Heart right ventricle (tissue), 16 donors: ENCODE measurements at regions of chr16 and their contacts with region 1.

Region 1: GRCh38 chr16:57413301-57413730 is 8.7 kb downstream of the CCL17 start:
- DNase-seq: no peak
- ATAC-seq: no peak
- H3K4me3 ChIP-seq: no peak overlapping the region
- H3K27ac ChIP-seq: no peak overlapping the region
- H3K4me1 ChIP-seq: peaks cover 11 to 51% (median 41%) of the 10 kb centered on the region in 9 donors
- H3K27me3 ChIP-seq: no peaks in the 10 kb centered on the region
- CTCF ChIP-seq: no peak

Region 2: DNA sequence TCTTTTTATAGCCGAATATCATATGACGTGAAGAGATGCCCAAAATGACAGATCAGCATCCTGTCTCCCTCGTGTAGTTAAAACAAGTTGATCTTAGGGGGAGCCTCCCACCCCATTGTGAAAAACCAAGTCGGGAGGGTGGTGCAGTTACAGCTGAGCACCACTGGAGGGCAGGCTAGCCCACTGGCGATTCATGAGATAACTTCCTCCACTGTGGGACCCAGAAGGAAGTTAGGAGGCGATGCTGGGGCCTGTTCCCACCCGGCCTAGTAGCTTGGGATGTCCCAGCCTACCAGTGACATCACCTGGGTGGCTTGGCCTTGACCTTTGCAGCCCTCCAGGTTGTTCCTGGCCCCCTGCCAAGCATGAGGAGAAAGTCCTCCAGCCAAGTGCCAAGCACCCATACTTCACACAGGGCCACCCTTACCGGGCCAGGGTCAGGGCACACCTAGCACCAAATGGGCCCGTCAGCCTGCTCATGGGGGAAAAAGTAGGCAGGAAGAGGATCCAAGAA is 329.0 kb before region 1 on chr16:
- intact Hi-C with region 1: loop called in 2 of 10 experiments (anchors 10 kb)
- DNase-seq: peak; percentile 62 to 74
- ATAC-seq: peak; percentile 78 to 89 (median 82)
- H3K4me3 ChIP-seq: no peak overlapping the region
- H3K27ac ChIP-seq: peak overlapping the region in 5 of 10 donors; percentile 9 to 59 (median 27)
- H3K4me1 ChIP-seq: peaks cover 0 to 14% (median 7%) of the 10 kb centered on the region in 9 donors
- H3K27me3 ChIP-seq: no peaks in the 10 kb centered on the region
- CTCF ChIP-seq: peak; percentile 97 to 99 (median 98)

Region 3: GRCh38 chr16:57244767-57245471 is 168.4 kb before region 1 on chr16 and contains the start of gene ARL2BP:
- intact Hi-C with region 1: loop called in 2 of 10 experiments (anchors 2 to 10 kb)
- DNase-seq: peak; percentile 97 to 98
- ATAC-seq: peak; percentile 97 to 100 (median 98)
- H3K4me3 ChIP-seq: peak within 1 kb of the TSS; percentile 74 to 97 (median 82)
- H3K27ac ChIP-seq: peak within 1 kb of the TSS; percentile 89 to 97 (median 96)
- H3K4me1 ChIP-seq: peaks cover 0 to 31% (median 12%) of the 10 kb centered on the region in 9 donors
- H3K27me3 ChIP-seq: no peaks in the 10 kb centered on the region
- CTCF ChIP-seq: peak in 5 of 9 donors; percentile 8 to 40 (median 25)
- total RNA-seq, gene ARL2BP: 39.9 to 53.9 (median 45.9) TPM

Region 4: GRCh38 chr16:57316390-57317017 is 96.8 kb before region 1 on chr16:
- intact Hi-C with region 1: loop called in 1 of 10 experiments (anchors 5 kb)
- DNase-seq: peak in 1 of 2 donors; percentile 79
- ATAC-seq: peak; percentile 78 to 92 (median 86)
- H3K4me3 ChIP-seq: no peak overlapping the region
- H3K27ac ChIP-seq: peak overlapping the region in 9 of 10 donors; percentile 62 to 87 (median 80)
- H3K4me1 ChIP-seq: peaks cover 0 to 56% (median 36%) of the 10 kb centered on the region in 9 donors
- H3K27me3 ChIP-seq: no peaks in the 10 kb centered on the region
- CTCF ChIP-seq: no peak

Region 5: GRCh38 chr16:57372372-57373116 is 40.8 kb before region 1 on chr16 and contains the start of gene CX3CL1:
- intact Hi-C with region 1: loop called in 4 of 10 experiments (anchors 2 to 5 kb)
- DNase-seq: peak; percentile 64 to 83
- ATAC-seq: peak; percentile 70 to 95 (median 89)
- H3K4me3 ChIP-seq: peak within 1 kb of the TSS; percentile 42 to 83 (median 70)
- H3K27ac ChIP-seq: peak within 1 kb of the TSS; percentile 72 to 97 (median 94)
- H3K4me1 ChIP-seq: peaks cover 0 to 59% (median 25%) of the 10 kb centered on the region in 9 donors
- H3K27me3 ChIP-seq: no peaks in the 10 kb centered on the region
- CTCF ChIP-seq: peak in 7 of 9 donors; percentile 24 to 64 (median 39)
- total RNA-seq, gene CX3CL1: 7.8 to 46.3 (median 14.5) TPM

Region 6: DNA sequence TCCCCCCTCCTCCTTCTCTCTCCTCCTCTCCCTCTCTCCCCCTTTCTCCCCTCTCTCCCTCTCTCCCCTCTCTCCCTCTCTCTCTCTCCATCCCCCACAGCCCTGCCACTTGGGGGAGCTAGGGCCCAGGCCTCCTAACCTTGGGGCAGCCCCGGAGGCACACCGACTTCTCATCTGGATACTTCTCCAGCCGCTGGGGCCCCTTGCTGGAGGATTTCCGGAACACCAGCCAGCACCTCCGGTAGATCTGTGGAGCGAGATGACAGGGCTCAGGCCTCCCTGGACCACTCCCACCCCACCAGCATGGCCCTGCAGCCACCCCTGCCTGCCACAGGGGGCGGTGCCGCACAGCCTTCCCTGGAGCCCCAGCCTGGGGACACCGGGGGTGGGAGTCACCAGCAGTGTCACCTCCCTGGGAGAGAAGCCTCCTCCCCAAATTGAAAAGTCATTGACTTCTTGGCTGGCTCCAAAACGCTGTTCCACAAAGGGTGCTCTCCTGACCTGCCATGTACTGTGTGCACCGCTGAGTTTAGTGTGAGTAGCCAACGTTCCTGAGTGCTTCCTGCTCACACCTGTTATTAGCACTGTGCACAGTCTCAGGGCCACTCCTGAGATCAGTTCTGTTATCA is 62.5 kb after region 1 on chr16:
- intact Hi-C with region 1: no loop called
- DNase-seq: no peak
- ATAC-seq: peak in 6 of 8 donors; percentile 24 to 55 (median 36)
- H3K4me3 ChIP-seq: no peak overlapping the region
- H3K27ac ChIP-seq: peak overlapping the region in 1 of 10 donors; percentile 36
- H3K4me1 ChIP-seq: peaks cover 19 to 65% (median 49%) of the 10 kb centered on the region in 9 donors
- H3K27me3 ChIP-seq: peaks cover 0 to 11% (median 0%) of the 10 kb centered on the region in 7 donors
- CTCF ChIP-seq: peak; percentile 35 to 77 (median 61)